CD4-positive, alpha-beta memory T cell (primary cell): ENCODE measurements at regions of chr19 and their contacts with region 1.

Region 1: DNA sequence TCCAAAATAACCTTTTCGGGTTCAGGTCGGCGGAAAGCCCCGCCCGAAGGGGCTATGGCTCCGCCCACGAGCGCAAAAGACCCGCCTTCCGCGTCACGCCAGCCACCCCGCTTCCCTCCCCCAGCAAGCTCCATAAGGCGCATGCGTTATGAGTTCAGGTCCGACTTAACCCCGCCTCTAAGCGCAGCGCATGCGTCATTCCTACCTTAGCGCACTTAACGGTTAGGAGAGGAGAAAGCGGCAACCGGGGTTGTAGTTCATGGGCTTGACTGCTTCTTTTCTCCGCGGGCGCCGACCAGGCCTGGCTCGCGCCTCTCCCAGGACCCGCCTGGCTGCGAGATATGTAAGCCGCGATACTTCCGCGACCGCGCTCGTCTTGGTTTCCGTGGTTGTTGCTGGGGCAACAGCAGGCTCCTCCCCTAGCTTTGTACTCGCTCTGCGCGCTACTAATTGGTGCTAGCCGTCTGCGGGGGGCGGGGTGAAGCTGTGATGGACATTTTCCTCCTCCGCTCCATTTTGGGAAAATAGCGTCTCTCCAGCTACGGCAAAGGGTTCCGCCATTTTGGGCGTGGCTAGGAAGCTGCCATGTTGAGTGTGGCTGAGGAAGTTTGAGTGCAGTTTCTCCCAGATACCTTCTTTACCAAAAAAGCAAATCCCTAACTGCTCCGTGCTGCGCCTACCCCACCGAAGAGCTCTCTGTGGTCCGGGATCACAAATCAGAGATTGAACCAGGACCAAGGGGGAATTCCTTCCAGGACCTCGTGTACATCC is at the start of gene B9D2:
- DNase-seq: peak; percentile 98 to 99 (median 99)
- H3K4me3 ChIP-seq: peak within 1 kb of the TSS; percentile 77 to 91
- H3K4me3 Mint-ChIP-seq: peak within 1 kb of the TSS; percentile 93 to 98 (median 95)
- H3K27ac ChIP-seq: peak within 1 kb of the TSS; percentile 99
- H3K27ac Mint-ChIP-seq: peak within 1 kb of the TSS; percentile 97 to 100 (median 100)
- H3K4me1 ChIP-seq: peaks cover 24% of the 10 kb centered on the region
- H3K4me1 Mint-ChIP-seq: peaks cover 15 to 45% (median 23%) of the 10 kb centered on the region in 4 donors
- H3K27me3 ChIP-seq: no peaks in the 10 kb centered on the region
- H3K27me3 Mint-ChIP-seq: no peaks in the 10 kb centered on the region
- total RNA-seq, gene B9D2: 11.6 to 15.2 TPM

Region 2: DNA sequence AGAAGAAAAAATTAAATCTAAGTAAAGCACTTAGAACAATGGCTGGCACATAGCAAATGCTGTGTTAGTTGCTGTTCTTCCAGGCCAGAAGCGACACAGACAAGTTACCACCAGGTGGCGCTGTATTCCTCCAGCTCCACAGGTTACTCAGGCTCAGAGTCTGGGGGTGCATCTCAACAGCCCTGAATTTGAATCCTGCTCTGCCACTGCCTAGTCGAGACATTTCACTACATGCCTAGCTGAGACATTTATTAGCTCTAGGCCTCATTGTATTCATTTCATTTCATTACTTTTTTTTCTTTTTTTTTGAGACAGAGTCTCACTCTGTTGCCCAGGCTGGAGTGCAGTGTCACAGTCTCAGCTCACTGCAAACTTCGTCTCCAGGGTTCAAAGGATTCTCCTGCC is 389.3 kb before region 1 on chr19:
- CTCF ChIA-PET with region 1: no interaction called
- POLR2A ChIA-PET with region 1: no interaction called
- intact Hi-C with region 1: no loop called
- DNase-seq: peak; percentile 72 to 79 (median 73)
- H3K4me3 ChIP-seq: no peak overlapping the region
- H3K4me3 Mint-ChIP-seq: no peak overlapping the region
- H3K27ac ChIP-seq: no peak overlapping the region
- H3K27ac Mint-ChIP-seq: peak overlapping the region in 1 of 7 donors; percentile 9
- H3K4me1 ChIP-seq: peaks cover 22% of the 10 kb centered on the region
- H3K4me1 Mint-ChIP-seq: peaks cover 22 to 31% (median 26%) of the 10 kb centered on the region in 4 donors
- H3K27me3 ChIP-seq: no peaks in the 10 kb centered on the region
- H3K27me3 Mint-ChIP-seq: peaks cover 5 to 7% of the 10 kb centered on the region in 2 donors

Region 3: GRCh38 chr19:41273076-41273475 is 90.9 kb before region 1 on chr19:
- CTCF ChIA-PET with region 1: no interaction called
- POLR2A ChIA-PET with region 1: no interaction called
- intact Hi-C with region 1: no loop called
- DNase-seq: no peak
- H3K4me3 ChIP-seq: no peak overlapping the region
- H3K4me3 Mint-ChIP-seq: no peak overlapping the region
- H3K27ac ChIP-seq: no peak overlapping the region
- H3K27ac Mint-ChIP-seq: peak overlapping the region in 2 of 7 donors; percentile 1 to 45
- H3K4me1 ChIP-seq: peaks cover 2% of the 10 kb centered on the region
- H3K4me1 Mint-ChIP-seq: peaks cover 5 to 16% (median 7%) of the 10 kb centered on the region in 4 donors
- H3K27me3 ChIP-seq: no peaks in the 10 kb centered on the region
- H3K27me3 Mint-ChIP-seq: no peaks in the 10 kb centered on the region

Region 4: GRCh38 chr19:41298348-41298964 is 65.5 kb before region 1 on chr19:
- CTCF ChIA-PET with region 1: no interaction called
- POLR2A ChIA-PET with region 1: interaction called, 273 read pairs
- intact Hi-C with region 1: no loop called
- DNase-seq: peak; percentile 47 to 80 (median 56)
- H3K4me3 ChIP-seq: no peak overlapping the region
- H3K4me3 Mint-ChIP-seq: peak overlapping the region in 7 of 8 donors; percentile 59 to 85 (median 70)
- H3K27ac ChIP-seq: peak overlapping the region; percentile 76
- H3K27ac Mint-ChIP-seq: peak overlapping the region; percentile 95 to 100 (median 99)
- H3K4me1 ChIP-seq: peaks cover 85% of the 10 kb centered on the region
- H3K4me1 Mint-ChIP-seq: peaks cover 72 to 92% (median 82%) of the 10 kb centered on the region in 4 donors
- H3K27me3 ChIP-seq: no peaks in the 10 kb centered on the region
- H3K27me3 Mint-ChIP-seq: no peaks in the 10 kb centered on the region

Region 5: GRCh38 chr19:41376241-41376997 is 12.5 kb after region 1 on chr19 and contains the start of gene TMEM91:
- CTCF ChIA-PET with region 1: interaction called, 4 read pairs
- POLR2A ChIA-PET with region 1: interaction called, 11 read pairs
- intact Hi-C with region 1: no loop called
- DNase-seq: no peak
- H3K4me3 ChIP-seq: peak within 1 kb of the TSS; percentile 19 to 57
- H3K4me3 Mint-ChIP-seq: peak within 1 kb of the TSS; percentile 80 to 91 (median 86)
- H3K27ac ChIP-seq: peak within 1 kb of the TSS; percentile 20
- H3K27ac Mint-ChIP-seq: peak within 1 kb of the TSS in 6 of 7 donors; percentile 70 to 95 (median 86)
- H3K4me1 ChIP-seq: peaks cover 7% of the 10 kb centered on the region
- H3K4me1 Mint-ChIP-seq: peaks cover 11 to 16% (median 12%) of the 10 kb centered on the region in 4 donors
- H3K27me3 ChIP-seq: no peaks in the 10 kb centered on the region
- H3K27me3 Mint-ChIP-seq: no peaks in the 10 kb centered on the region
- total RNA-seq, gene TMEM91: 14.3 to 16.1 TPM

Region 6: GRCh38 chr19:41397086-41398049 is 33.4 kb after region 1 on chr19 and contains the starts of genes BCKDHA and EXOSC5:
- CTCF ChIA-PET with region 1: interaction called, 6 read pairs
- POLR2A ChIA-PET with region 1: interaction called, 14 read pairs
- intact Hi-C with region 1: loop called (anchors 1 kb)
- DNase-seq: peak; percentile 98 to 100 (median 100)
- H3K4me3 ChIP-seq: peak within 1 kb of the TSS; percentile 94 to 96
- H3K4me3 Mint-ChIP-seq: peak within 1 kb of the TSS; percentile 94 to 100 (median 98)
- H3K27ac ChIP-seq: peak within 1 kb of the TSS; percentile 93
- H3K27ac Mint-ChIP-seq: peak within 1 kb of the TSS; percentile 98 to 100 (median 100)
- H3K4me1 ChIP-seq: peaks cover 31% of the 10 kb centered on the region
- H3K4me1 Mint-ChIP-seq: peaks cover 27 to 54% (median 41%) of the 10 kb centered on the region in 4 donors
- H3K27me3 ChIP-seq: no peaks in the 10 kb centered on the region
- H3K27me3 Mint-ChIP-seq: no peaks in the 10 kb centered on the region
- total RNA-seq, gene BCKDHA: 23.6 to 27.1 TPM
- total RNA-seq, gene EXOSC5: 18.2 to 23.0 TPM

Region 7: DNA sequence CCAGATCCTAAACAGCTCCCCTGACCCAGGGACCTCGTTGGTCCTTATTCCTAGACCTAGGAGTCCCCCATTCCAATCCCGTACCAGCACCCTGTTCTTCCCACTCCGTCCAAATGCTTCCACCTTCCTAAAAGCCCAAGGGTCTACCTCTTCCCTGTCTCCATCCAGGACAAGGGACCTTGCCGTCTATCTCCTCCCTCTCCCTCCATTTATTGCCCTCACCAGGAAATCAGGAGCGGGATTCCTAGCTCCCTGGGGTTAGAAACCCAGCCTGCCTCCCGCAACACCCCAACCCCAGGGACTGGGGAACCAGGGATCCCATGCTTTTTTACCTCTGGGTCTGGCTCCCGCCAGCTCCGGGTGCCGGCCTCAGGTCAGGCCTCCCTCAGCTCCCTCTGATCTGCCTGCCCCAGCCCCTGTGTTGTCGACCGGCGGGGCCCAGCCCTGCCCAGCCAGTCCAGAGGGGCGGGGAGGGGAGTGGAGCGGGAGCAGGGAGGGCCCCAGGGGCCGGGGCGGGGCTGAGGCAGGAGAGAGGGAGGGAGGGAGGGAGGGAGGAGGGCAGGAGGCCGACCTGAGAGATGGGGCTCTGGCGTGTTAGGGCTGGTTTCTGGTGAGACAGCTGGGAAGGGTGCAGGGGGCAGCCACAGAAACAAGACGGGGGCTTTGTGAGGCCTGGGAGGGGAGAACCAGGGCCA is 63.2 kb after region 1 on chr19 and contains the start of gene B3GNT8:
- CTCF ChIA-PET with region 1: interaction called, 8 read pairs
- POLR2A ChIA-PET with region 1: interaction called, 17 read pairs
- intact Hi-C with region 1: no loop called
- DNase-seq: peak; percentile 16 to 52 (median 32)
- H3K4me3 ChIP-seq: peak within 1 kb of the TSS; percentile 33 to 34
- H3K4me3 Mint-ChIP-seq: peak within 1 kb of the TSS; percentile 90 to 98 (median 92)
- H3K27ac ChIP-seq: peak within 1 kb of the TSS; percentile 68
- H3K27ac Mint-ChIP-seq: peak within 1 kb of the TSS; percentile 91 to 98 (median 96)
- H3K4me1 ChIP-seq: peaks cover 39% of the 10 kb centered on the region
- H3K4me1 Mint-ChIP-seq: peaks cover 15 to 51% (median 34%) of the 10 kb centered on the region in 4 donors
- H3K27me3 ChIP-seq: no peaks in the 10 kb centered on the region
- H3K27me3 Mint-ChIP-seq: no peaks in the 10 kb centered on the region
- total RNA-seq, gene B3GNT8: 2.9 to 3.2 TPM

Region 8: DNA sequence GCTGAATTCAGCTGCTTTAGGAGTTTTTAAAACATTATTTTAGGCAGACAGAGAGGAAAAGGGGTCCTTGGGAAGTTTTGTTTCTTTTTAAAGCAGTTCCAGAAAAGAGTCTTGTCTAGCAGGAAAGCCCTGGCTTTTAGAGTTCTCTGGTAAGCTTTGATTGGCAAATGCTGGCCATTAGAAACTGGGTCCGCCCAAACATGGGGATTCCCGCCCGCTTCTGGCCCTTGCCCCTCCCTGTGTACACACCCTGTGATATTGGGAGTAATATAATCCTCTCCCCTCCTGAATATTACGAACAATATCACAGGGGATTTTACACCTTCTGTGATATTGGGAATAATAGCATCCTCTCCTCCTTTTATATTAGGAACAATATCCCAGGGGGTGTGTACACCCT is 137.9 kb after region 1 on chr19:
- CTCF ChIA-PET with region 1: no interaction called
- POLR2A ChIA-PET with region 1: no interaction called
- intact Hi-C with region 1: no loop called
- DNase-seq: no peak
- H3K4me3 ChIP-seq: no peak overlapping the region
- H3K4me3 Mint-ChIP-seq: no peak overlapping the region
- H3K27ac ChIP-seq: no peak overlapping the region
- H3K27ac Mint-ChIP-seq: no peak overlapping the region
- H3K4me1 ChIP-seq: no peaks in the 10 kb centered on the region
- H3K4me1 Mint-ChIP-seq: peaks cover 0 to 4% (median 2%) of the 10 kb centered on the region in 4 donors
- H3K27me3 ChIP-seq: peaks cover 4% of the 10 kb centered on the region
- H3K27me3 Mint-ChIP-seq: peaks cover 26 to 34% of the 10 kb centered on the region in 2 donors